ENCODE measurements at regions of chr1 and their contacts with region 1.

Region 1: GRCh38 chr1:62508187-62508758 is 71.4 kb downstream of the USP1 start:
- DNase-seq: no peak
- ATAC-seq: no peak
- H3K4me3 Mint-ChIP-seq: no peak overlapping the region
- H3K27ac Mint-ChIP-seq: no peak overlapping the region
- H3K4me1 Mint-ChIP-seq: no peaks in the 10 kb centered on the region
- H3K27me3 Mint-ChIP-seq: no peaks in the 10 kb centered on the region
- CTCF ChIP-seq: 0 out of 2 replicates have a peak, but pooled peaks have one; percentile 15

Region 2: GRCh38 chr1:62457955-62458354 is 50.3 kb before region 1 on chr1:
- CTCF ChIA-PET with region 1: no interaction called
- POLR2A ChIA-PET with region 1: no interaction called
- DNase-seq: no peak
- ATAC-seq: no peak
- H3K4me3 Mint-ChIP-seq: no peak overlapping the region
- H3K27ac Mint-ChIP-seq: no peak overlapping the region
- H3K4me1 Mint-ChIP-seq: no peaks in the 10 kb centered on the region
- H3K27me3 Mint-ChIP-seq: no peaks in the 10 kb centered on the region
- CTCF ChIP-seq: no peak

Region 3: GRCh38 chr1:62746085-62746808 is 238.0 kb after region 1 on chr1:
- CTCF ChIA-PET with region 1: interaction called, 16 read pairs
- POLR2A ChIA-PET with region 1: no interaction called
- DNase-seq: no peak
- ATAC-seq: peak; percentile 28; the same call in 1 of the 2 replicates
- H3K4me3 Mint-ChIP-seq: no peak overlapping the region
- H3K27ac Mint-ChIP-seq: no peak overlapping the region
- H3K4me1 Mint-ChIP-seq: peaks cover 12% of the 10 kb centered on the region
- H3K27me3 Mint-ChIP-seq: no peaks in the 10 kb centered on the region
- CTCF ChIP-seq: no peak

Measured in WTC11 (cell line).